HEK293T (cell line): ENCODE measurements at regions of chr1 and their contacts with region 1.

Region 1: GRCh38 chr1:209860293-209860881 is 32.6 kb downstream of the UTP25 start:
- DNase-seq: peak; percentile 87

Region 2: DNA sequence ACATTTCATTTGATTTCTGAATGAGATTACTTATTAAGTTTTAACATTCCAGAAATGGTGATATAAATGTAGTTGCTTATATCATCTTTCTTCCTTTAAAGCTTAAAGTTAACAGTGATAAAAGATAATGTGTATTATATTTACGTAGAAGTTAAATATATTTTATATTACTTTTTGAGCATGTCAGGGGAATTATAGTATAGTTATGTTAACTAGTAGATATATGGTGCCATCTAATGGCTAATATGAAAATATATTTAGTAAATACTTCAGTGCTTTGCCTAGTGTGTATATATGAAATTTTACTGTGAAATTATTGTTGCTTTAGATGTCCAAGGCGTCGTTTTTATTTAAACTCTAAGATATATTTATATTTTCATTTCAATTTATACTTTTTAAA is 129.1 kb after region 1 on chr1:
- CTCF ChIA-PET with region 1: interaction called, 19 read pairs
- POLR2A ChIA-PET with region 1: no interaction called
- DNase-seq: no peak